HCT116 (cell line): ENCODE measurements at regions of chrX and their contacts with region 1.

Region 1: GRCh38 chrX:119516157-119516702 is 48.0 kb downstream of the SLC25A5 start:
- DNase-seq: peak; percentile 39
- ATAC-seq: peak; percentile 80
- H3K4me3 ChIP-seq: no peak overlapping the region
- H3K27ac ChIP-seq: no peak overlapping the region
- H3K4me1 ChIP-seq: peaks cover 0 to 8% of the 10 kb centered on the region in 2 experiments; a peak in 2 of 4 replicates
- H3K27me3 ChIP-seq: no peaks in the 10 kb centered on the region
- CTCF ChIP-seq: peak; percentile 77 to 92 (median 80)
- POLR2A ChIP-seq: no peak
- RAD21 ChIP-seq: peak; percentile 92

Region 2: DNA sequence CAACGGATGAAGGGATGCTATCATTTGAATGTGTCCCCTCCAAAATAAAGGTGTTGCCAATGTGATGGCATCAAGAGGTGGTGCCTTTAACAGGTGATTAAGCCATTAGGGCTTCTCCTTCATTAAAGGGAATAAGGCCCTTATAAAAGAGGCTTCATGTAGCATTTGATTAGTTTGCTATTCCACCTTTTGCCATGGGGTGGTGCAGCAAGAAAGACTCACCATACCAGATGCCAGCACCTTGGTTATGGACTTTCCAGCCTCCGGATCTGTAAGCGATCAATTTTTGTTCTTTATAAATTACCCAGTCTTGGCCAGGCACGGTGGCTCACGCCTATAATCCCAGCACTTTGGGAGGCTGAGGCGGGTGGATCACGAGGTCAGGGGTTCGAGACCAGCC is 125.0 kb before region 1 on chrX:
- CTCF ChIA-PET with region 1: interaction called, 3 read pairs
- POLR2A ChIA-PET with region 1: no interaction called
- RAD21 ChIA-PET with region 1: no interaction called
- intact Hi-C with region 1: loop called (anchors 1 kb)
- DNase-seq: peak; percentile 23
- ATAC-seq: peak; percentile 77
- H3K4me3 ChIP-seq: no peak overlapping the region
- H3K27ac ChIP-seq: no peak overlapping the region
- H3K4me1 ChIP-seq: no peaks in the 10 kb centered on the region
- H3K27me3 ChIP-seq: no peaks in the 10 kb centered on the region
- CTCF ChIP-seq: peak; percentile 27 to 35 (median 34); a peak in 4 of 6 replicates
- POLR2A ChIP-seq: no peak
- RAD21 ChIP-seq: peak; percentile 51

Region 3: GRCh38 chrX:119488749-119489148 is 27.5 kb before region 1 on chrX:
- CTCF ChIA-PET with region 1: interaction called, 36 read pairs
- POLR2A ChIA-PET with region 1: interaction called, 3 read pairs
- RAD21 ChIA-PET with region 1: interaction called, 4 to 7 read pairs
- intact Hi-C with region 1: loop called (anchors 1 kb)
- DNase-seq: no peak
- ATAC-seq: peak; percentile 72
- H3K4me3 ChIP-seq: no peak overlapping the region
- H3K27ac ChIP-seq: no peak overlapping the region
- H3K4me1 ChIP-seq: no peaks in the 10 kb centered on the region
- H3K27me3 ChIP-seq: no peaks in the 10 kb centered on the region
- CTCF ChIP-seq: peak; percentile 46 to 73 (median 50); a peak in 5 of 6 replicates
- POLR2A ChIP-seq: no peak
- RAD21 ChIP-seq: peak; percentile 73

Region 4: GRCh38 chrX:119729408-119730201 is 213.4 kb after region 1 on chrX:
- CTCF ChIA-PET with region 1: interaction called, 6 read pairs
- POLR2A ChIA-PET with region 1: no interaction called
- RAD21 ChIA-PET with region 1: no interaction called
- intact Hi-C with region 1: loop called (anchors 1 kb)
- DNase-seq: peak; percentile 54
- ATAC-seq: peak; percentile 81
- H3K4me3 ChIP-seq: no peak overlapping the region
- H3K27ac ChIP-seq: no peak overlapping the region
- H3K4me1 ChIP-seq: no peaks in the 10 kb centered on the region
- H3K27me3 ChIP-seq: no peaks in the 10 kb centered on the region
- CTCF ChIP-seq: peak; percentile 47 to 81 (median 54)
- POLR2A ChIP-seq: no peak
- RAD21 ChIP-seq: peak; percentile 80

Region 5: GRCh38 chrX:119880552-119881437 is 364.6 kb after region 1 on chrX:
- CTCF ChIA-PET with region 1: interaction called, 3 read pairs
- POLR2A ChIA-PET with region 1: no interaction called
- RAD21 ChIA-PET with region 1: no interaction called
- intact Hi-C with region 1: loop called (anchors 5 kb)
- DNase-seq: peak; percentile 23
- ATAC-seq: peak; percentile 94
- H3K4me3 ChIP-seq: no peak overlapping the region
- H3K27ac ChIP-seq: no peak overlapping the region
- H3K4me1 ChIP-seq: no peaks in the 10 kb centered on the region
- H3K27me3 ChIP-seq: no peaks in the 10 kb centered on the region
- CTCF ChIP-seq: peak; percentile 25 to 70 (median 57); a peak in 5 of 6 replicates
- POLR2A ChIP-seq: no peak
- RAD21 ChIP-seq: peak; percentile 56